Posterior vena cava (tissue), 2 donors: ENCODE measurements at regions of chr11 and their contacts with region 1.

Region 1: GRCh38 chr11:33736148-33736809 is at the start of gene CD59:
- DNase-seq: peak; percentile 98
- total RNA-seq, gene CD59: 654 to 1,001 TPM

Region 2: GRCh38 chr11:33687733-33688479 is 48.4 kb before region 1 on chr11:
- intact Hi-C with region 1: loop called in 1 of 2 experiments (anchors 5 kb)
- DNase-seq: no peak